Prostate gland (tissue), 2 donors: ENCODE measurements at regions of chr17 and their contacts with region 1.

Region 1: DNA sequence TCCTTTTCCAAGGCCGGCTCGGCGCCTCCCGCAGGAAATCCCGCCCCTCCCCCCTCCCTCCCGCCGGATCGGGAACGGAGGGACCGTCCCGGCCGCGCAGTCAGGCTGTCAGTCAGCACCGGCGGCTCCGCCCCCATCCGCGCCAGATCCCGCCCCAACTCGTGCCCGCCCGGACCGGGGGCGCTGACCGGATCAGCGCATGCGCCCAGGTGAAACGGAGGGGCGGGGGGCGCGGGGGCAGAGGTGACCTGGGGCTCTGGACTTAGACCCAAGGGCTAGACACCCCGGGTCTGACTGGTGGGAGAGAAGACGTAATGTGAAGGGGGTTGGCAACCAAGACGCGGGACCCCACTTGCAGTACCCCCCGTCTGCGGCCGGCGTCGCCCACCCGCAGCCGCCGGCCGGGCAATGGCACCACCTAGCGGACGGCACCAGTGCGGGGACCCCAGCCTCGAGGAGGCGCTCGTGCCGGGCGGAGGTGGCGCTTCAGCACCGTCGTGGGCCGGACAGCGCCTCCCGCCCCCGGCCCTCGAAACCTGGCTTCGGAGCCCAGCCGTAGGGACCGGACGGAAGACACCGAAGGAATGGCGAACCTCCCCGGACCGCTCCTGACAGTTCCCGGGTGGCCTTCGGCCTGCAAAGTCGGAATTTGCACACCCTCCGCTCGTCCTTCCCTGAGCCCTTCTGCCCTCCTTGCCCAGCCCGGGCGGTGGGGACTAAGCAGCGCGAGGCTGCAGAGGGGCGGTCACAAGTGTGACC is at the start of gene CASKIN2:
- DNase-seq: peak; percentile 95
- H3K4me3 ChIP-seq: peak within 1 kb of the TSS; percentile 82
- H3K27ac ChIP-seq: peak within 1 kb of the TSS; percentile 75 to 79
- H3K4me1 ChIP-seq: peaks cover 7% of the 10 kb centered on the region
- H3K27me3 ChIP-seq: no peaks in the 10 kb centered on the region
- CTCF ChIP-seq: peak; percentile 96 to 99 (median 98)
- POLR2A ChIP-seq: peak; percentile 8
- total RNA-seq, gene CASKIN2: 16.0 to 35.8 TPM

Region 2: DNA sequence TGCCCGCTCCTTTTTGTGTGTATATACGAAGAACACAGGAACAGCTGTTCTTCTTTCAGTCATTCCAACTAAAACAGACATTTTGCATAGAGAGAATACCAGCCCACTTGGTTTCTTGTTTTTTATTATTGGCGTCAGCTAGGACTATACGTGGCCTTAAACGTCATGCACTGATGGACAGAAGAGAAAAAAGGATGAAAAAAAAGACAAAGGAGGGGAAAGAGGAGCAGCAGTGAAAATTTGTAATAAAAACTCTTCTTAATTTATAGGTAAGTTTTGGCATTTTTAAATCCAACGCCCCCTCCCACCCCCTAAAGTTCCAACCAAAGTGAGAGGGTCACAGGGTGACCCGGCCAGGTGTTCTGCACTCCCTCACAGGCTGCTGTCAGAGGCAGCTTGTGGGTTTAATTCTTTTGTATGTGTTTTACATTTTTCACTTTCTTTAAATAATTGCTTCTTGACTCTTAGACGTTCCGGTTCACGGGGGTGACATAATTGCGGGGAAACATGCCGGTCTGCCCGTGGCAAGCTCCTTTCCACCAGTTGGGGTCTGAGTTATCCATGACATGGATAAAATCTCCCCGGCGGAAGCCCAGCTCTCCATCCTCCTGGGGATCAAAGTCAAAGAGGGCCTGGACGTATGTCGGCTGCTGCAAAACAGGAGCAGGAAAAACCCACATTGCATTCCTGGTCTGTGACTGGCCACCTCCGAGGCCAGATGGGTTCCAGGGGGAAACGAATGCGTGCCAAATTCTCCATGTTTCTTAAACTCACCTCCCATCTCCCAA is 195.6 kb before region 1 on chr17:
- intact Hi-C with region 1: loop called (anchors 10 kb)
- DNase-seq: no peak
- H3K4me3 ChIP-seq: no peak overlapping the region
- H3K27ac ChIP-seq: no peak overlapping the region
- H3K4me1 ChIP-seq: no peaks in the 10 kb centered on the region
- H3K27me3 ChIP-seq: no peaks in the 10 kb centered on the region
- CTCF ChIP-seq: no peak
- POLR2A ChIP-seq: no peak

Region 3: DNA sequence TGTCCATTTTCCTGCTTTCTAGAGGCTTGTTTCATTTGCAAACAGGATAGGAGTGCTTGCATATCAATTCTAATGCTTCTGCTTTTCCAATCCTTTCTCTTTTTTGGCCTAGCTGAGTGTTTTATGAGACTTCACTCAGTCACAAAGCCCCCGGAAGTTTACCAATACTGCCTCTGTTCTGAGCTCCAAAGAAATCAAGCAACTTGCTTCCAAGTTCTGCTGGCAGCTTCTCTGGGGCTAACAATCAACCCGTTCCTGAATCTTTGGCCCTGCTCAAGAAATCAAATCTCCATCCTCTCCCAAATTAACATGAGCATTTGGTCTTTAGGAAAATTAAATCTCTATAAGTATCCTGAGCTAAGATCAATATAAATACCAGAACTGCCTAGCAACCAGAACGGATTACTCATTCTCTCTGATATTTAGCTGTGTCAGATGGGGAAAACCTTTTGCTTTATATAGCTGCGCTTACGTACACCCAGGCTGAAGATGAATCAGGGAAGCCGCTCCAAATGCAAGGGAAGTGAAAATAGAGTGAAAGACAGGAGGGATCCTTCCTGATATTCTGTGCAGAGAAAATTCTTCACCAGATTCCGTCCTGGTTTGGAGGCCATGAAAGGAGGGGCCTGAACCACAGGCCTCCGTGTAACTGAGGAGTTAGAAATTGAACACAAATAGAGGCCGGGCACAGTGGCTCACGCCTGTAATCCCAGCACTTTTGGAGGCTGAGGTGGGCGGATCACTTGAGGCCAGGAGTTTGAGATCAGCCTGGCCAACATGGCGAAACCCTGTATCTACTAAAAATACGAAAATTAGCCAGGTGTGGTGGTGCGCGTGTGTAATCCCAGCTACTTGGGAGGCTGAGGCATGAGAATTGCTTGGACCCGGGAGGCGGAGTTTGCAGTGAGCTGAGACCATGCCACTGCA is 86.9 kb before region 1 on chr17:
- intact Hi-C with region 1: loop called (anchors 5 kb)
- DNase-seq: no peak
- H3K4me3 ChIP-seq: no peak overlapping the region
- H3K27ac ChIP-seq: peak overlapping the region; percentile 29 to 56
- H3K4me1 ChIP-seq: no peaks in the 10 kb centered on the region
- H3K27me3 ChIP-seq: no peaks in the 10 kb centered on the region
- CTCF ChIP-seq: no peak
- POLR2A ChIP-seq: no peak

Region 4: GRCh38 chr17:75589012-75589918 is 73.6 kb after region 1 on chr17:
- intact Hi-C with region 1: loop called (anchors 2 kb)
- DNase-seq: peak; percentile 96
- H3K4me3 ChIP-seq: peak overlapping the region; percentile 52 to 56
- H3K27ac ChIP-seq: peak overlapping the region; percentile 83 to 90
- H3K4me1 ChIP-seq: peaks cover 10% of the 10 kb centered on the region
- H3K27me3 ChIP-seq: no peaks in the 10 kb centered on the region
- CTCF ChIP-seq: peak; percentile 87 to 94 (median 92)
- POLR2A ChIP-seq: peak; percentile 67

Region 5: GRCh38 chr17:75749545-75750389 is 234.1 kb after region 1 on chr17:
- intact Hi-C with region 1: loop called (anchors 10 kb)
- DNase-seq: peak; percentile 76
- H3K4me3 ChIP-seq: no peak overlapping the region
- H3K27ac ChIP-seq: peak overlapping the region; percentile 30 to 58
- H3K4me1 ChIP-seq: no peaks in the 10 kb centered on the region
- H3K27me3 ChIP-seq: no peaks in the 10 kb centered on the region
- CTCF ChIP-seq: peak; percentile 93 to 98 (median 94)
- POLR2A ChIP-seq: no peak